PC-3 (cell line): ENCODE measurements at regions of chr4 and their contacts with region 1.

Region 1: DNA sequence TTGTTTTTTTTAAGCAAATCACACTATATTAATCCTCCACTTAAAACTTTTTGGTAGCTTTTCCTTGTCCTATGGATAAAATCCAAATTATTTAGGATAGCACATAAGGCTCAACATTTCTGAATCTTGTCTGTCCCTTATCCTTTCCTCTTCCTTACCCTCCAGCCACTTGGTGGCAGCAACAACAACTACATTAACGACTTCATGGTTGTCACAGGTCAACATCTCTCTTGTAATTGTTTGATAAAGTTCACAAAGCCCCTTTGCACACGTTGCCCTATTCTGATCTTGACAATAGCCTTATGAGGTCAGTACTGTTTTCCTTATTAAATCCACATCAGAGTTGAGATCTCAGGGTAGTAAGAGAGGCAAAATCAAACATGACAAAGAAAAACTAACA is 269.0 kb upstream of the PABPC4L start:
- DNase-seq: peak; percentile 34
- ATAC-seq: no peak
- H3K4me3 ChIP-seq: no peak overlapping the region
- H3K27ac ChIP-seq: no peak overlapping the region
- H3K4me1 ChIP-seq: no peaks in the 10 kb centered on the region
- H3K27me3 ChIP-seq: no peaks in the 10 kb centered on the region
- CTCF ChIP-seq: peak; percentile 56

Region 2: DNA sequence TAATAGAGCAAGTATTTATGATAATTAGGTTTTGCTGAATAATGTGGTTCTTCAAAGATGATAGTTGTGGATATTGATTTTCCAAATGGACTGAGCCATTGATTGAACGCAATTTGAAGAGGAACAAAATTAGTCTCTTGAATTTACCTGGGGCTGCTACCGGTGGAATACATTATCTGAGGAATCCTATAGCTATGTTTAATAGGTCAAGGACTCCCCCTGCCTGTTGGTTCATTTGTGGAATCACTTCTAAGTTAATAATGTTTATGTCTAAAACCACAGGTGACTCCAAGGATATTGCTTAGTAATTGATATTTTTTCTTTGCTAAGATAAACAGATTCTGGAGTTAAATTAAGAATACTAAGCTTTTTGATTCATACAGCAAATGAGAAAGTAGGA is 307.1 kb after region 1 on chr4:
- CTCF ChIA-PET with region 1: no interaction called
- POLR2A ChIA-PET with region 1: no interaction called
- intact Hi-C with region 1: loop called (anchors 2 kb)
- DNase-seq: peak; percentile 15
- ATAC-seq: peak; percentile 38; the same call in 1 of the 2 replicates
- H3K4me3 ChIP-seq: no peak overlapping the region
- H3K27ac ChIP-seq: no peak overlapping the region
- H3K4me1 ChIP-seq: no peaks in the 10 kb centered on the region
- H3K27me3 ChIP-seq: no peaks in the 10 kb centered on the region
- CTCF ChIP-seq: peak; percentile 40; the same call in 1 of the 2 replicates

Region 3: DNA sequence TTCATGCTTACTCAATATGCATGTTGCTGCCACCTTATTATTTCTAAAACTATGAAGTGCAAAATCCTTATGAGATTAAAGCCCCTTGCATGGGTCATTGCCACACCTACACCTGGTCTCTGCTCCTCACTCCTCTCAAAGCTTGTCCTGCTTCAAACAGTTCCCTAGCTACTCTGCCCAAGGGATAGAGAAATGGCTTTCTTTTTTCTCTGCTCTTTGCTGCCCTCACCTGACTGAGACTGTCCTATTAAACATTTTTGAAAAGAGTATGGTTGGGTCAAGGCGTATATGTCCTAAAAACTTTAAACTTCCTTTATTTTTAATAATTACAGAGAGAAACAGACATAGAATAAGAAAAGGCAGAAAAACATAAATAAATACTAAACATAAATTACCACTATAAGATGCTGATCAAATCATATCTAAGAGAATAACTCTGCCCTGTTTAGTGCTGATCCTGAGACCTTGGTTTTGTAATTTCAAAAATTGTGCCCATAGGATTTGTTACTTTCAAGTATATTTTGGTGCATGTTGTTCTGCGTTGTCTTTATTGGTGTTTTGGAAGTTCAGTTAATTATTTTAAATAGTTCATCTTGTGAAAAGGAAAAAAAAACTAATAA is 436.0 kb after region 1 on chr4:
- CTCF ChIA-PET with region 1: no interaction called
- POLR2A ChIA-PET with region 1: no interaction called
- intact Hi-C with region 1: loop called (anchors 10 kb)
- DNase-seq: peak; percentile 35
- ATAC-seq: peak; percentile 75
- H3K4me3 ChIP-seq: no peak overlapping the region
- H3K27ac ChIP-seq: no peak overlapping the region
- H3K4me1 ChIP-seq: no peaks in the 10 kb centered on the region
- H3K27me3 ChIP-seq: no peaks in the 10 kb centered on the region
- CTCF ChIP-seq: peak; percentile 56